ENCODE measurements at regions of chr1 and their contacts with region 1.

Region 1: GRCh38 chr1:60281360-60281932 is 207.9 kb upstream of the C1orf87 start:
- DNase-seq: peak; percentile 51 to 66 (median 55)
- ATAC-seq: peak; percentile 94
- H3K4me3 ChIP-seq: no peak overlapping the region
- H3K27ac ChIP-seq: no peak overlapping the region
- H3K4me1 ChIP-seq: no peaks in the 10 kb centered on the region
- H3K27me3 ChIP-seq: no peaks in the 10 kb centered on the region

Region 2: GRCh38 chr1:59880735-59881134 is 400.7 kb before region 1 on chr1:
- intact Hi-C with region 1: no loop called
- DNase-seq: peak; percentile 44 to 69 (median 47)
- ATAC-seq: peak in 1 of 2 donors; percentile 48
- H3K4me3 ChIP-seq: no peak overlapping the region
- H3K27ac ChIP-seq: no peak overlapping the region
- H3K4me1 ChIP-seq: peaks cover 2% of the 10 kb centered on the region
- H3K27me3 ChIP-seq: no peaks in the 10 kb centered on the region

Region 3: GRCh38 chr1:60765204-60765603 is 483.8 kb after region 1 on chr1:
- intact Hi-C with region 1: loop called in 1 of 4 experiments (anchors 10 kb)
- DNase-seq: no peak
- ATAC-seq: peak in 1 of 2 donors; percentile 31
- H3K4me3 ChIP-seq: no peak overlapping the region
- H3K27ac ChIP-seq: no peak overlapping the region
- H3K4me1 ChIP-seq: no peaks in the 10 kb centered on the region
- H3K27me3 ChIP-seq: no peaks in the 10 kb centered on the region

Region 4: DNA sequence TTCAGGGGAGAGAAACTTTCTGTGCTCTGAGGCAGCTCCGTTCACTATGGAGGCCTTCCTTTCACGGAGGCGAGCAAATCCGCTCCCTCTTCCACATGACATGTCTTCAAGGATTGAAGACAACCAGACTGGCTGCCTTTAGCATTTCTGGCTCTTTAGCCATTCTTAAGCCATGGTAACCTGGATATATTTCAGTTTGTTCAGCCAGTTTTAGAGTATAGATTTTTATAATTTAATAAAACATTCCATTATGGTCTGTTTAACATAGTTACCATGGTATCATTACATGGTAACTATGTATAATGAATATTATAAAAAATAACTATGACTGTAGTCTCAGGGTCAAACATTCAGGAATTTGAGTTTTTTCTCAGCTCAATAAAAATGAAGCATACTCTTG is 746.7 kb after region 1 on chr1:
- intact Hi-C with region 1: loop called in 1 of 4 experiments (anchors 5 kb)
- DNase-seq: no peak
- ATAC-seq: no peak
- H3K4me3 ChIP-seq: no peak overlapping the region
- H3K27ac ChIP-seq: no peak overlapping the region
- H3K4me1 ChIP-seq: no peaks in the 10 kb centered on the region
- H3K27me3 ChIP-seq: no peaks in the 10 kb centered on the region